ENCODE measurements at regions of chr20 and their contacts with region 1.

Region 1: GRCh38 chr20:9609887-9610502 is 95.6 kb downstream of the LAMP5 start:
- DNase-seq: peak; percentile 72
- H3K4me3 Mint-ChIP-seq: no peak overlapping the region
- H3K27ac Mint-ChIP-seq: no peak overlapping the region
- H3K4me1 Mint-ChIP-seq: no peaks in the 10 kb centered on the region
- H3K27me3 Mint-ChIP-seq: peaks cover 8% of the 10 kb centered on the region

Region 2: DNA sequence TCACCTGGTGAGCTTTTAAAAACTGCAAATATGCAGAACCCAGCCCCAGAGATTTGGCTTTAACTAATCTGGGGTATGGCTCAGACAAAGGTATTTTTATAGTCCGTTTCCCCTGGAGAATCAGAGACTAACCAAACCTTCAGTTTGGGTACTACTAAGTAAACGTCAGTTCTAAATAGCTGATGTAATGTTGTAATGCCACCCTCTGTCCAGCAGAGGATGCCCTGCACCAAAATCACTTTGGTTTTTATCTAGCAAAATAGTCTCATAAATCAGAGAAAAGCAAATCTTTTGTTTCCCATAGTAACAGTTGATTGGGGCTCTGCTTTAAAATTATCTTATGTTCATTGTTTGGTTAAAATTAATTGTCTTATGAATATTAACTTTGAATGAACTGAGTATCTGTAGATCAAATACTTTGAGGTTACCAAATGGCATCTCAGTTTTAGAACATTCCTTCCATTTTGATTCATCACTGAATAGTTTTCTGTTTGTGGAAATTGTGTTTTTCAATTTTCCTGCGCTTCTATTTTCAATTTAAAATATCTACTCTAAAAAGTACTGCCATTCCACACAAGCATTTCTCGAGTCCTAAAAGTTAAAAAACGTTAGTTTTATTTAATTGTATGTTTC is 819.4 kb before region 1 on chr20:
- CTCF ChIA-PET with region 1: no interaction called
- intact Hi-C with region 1: loop called (anchors 2 kb)
- DNase-seq: peak; percentile 35
- H3K4me3 Mint-ChIP-seq: no peak overlapping the region
- H3K27ac Mint-ChIP-seq: no peak overlapping the region
- H3K4me1 Mint-ChIP-seq: no peaks in the 10 kb centered on the region
- H3K27me3 Mint-ChIP-seq: no peaks in the 10 kb centered on the region

Region 3: GRCh38 chr20:9705722-9706476 is 95.9 kb after region 1 on chr20:
- CTCF ChIA-PET with region 1: no interaction called
- intact Hi-C with region 1: no loop called
- DNase-seq: no peak
- H3K4me3 Mint-ChIP-seq: no peak overlapping the region
- H3K27ac Mint-ChIP-seq: no peak overlapping the region
- H3K4me1 Mint-ChIP-seq: no peaks in the 10 kb centered on the region
- H3K27me3 Mint-ChIP-seq: no peaks in the 10 kb centered on the region